K562 (cell line): ENCODE measurements at regions of chr20 and their contacts with region 1.

Region 1: DNA sequence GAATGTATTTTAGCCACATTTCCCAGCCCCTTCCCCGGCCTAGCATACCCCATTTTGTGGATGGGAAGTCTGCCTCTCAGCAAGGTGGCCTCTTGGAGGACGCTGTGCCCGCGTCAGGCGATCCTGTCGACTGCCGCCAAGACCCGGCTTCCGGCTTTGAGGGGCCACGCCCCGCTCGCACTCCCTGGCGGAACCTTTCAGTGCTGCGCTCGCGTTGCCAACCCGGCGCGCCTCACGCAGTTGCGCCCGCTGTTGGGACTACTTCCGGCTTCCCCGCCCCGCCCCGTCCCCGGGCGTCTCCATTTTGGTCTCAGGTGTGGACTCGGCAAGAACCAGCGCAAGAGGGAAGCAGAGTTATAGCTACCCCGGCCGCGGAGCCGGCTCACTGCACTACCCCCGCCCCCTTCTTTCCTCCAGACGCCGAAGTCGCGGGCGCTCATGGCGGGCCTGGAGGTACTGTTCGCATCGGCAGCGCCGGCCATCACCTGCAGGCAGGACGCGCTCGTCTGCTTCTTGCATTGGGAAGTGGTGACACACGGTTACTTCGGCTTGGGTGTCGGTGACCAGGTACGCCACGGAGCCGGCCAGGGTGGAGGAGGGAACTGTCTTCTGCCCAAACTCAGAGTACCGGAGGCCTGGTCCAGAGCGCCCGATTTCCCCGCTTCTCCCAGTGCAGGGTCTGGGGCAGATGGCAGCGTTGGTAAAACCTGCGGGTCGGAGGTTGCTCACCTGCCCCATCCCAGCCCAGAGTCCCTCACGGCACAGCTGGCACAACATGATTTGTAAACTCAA is at the start of gene PSMF1:
- DNase-seq: peak; percentile 86 to 92 (median 87)
- ATAC-seq: peak; percentile 94
- H3K4me3 ChIP-seq: peak within 1 kb of the TSS; percentile 90
- H3K27ac ChIP-seq: peak within 1 kb of the TSS; percentile 86
- H3K4me1 ChIP-seq: peaks cover 14 to 42% of the 10 kb centered on the region in 2 experiments; a peak in 4 of 5 replicates
- H3K27me3 ChIP-seq: no peaks in the 10 kb centered on the region
- CTCF ChIP-seq: peak in 2 of 3 experiments; percentile 8 to 22; a peak in 2 of 6 replicates
- EP300 ChIP-seq: peak; percentile 50
- POLR2A ChIP-seq: peak; percentile 84
- RAD21 ChIP-seq: 0 out of 4 replicates have a peak, but pooled peaks of 1 of the 2 experiments have one; percentile 11
- polyA plus RNA-seq, gene PSMF1: 8.5 to 21.3 TPM

Region 2: DNA sequence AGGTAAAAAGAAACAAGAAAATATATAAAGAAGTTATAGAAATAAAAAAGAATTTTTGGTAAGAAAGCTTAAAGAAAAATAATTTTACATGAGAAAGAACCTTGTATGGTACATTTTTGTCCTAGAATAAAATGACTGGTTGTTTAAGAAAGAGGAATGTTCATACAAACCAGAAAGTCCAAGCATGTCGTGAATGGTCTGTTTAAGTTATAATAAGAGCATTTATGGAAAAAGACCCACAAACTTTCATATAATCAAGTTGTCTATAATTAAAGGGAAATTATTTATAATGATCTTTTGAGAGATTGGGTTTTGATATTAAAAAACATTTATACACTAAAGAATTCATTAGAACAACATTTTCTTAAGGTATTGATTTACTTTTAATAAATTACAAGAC is 312.8 kb before region 1 on chr20:
- CTCF ChIA-PET with region 1: no interaction called
- POLR2A ChIA-PET with region 1: no interaction called
- in situ Hi-C with region 1: no loop called
- intact Hi-C with region 1: no loop called
- DNase-seq: no peak
- ATAC-seq: no peak
- H3K4me3 ChIP-seq: no peak overlapping the region
- H3K27ac ChIP-seq: no peak overlapping the region
- H3K4me1 ChIP-seq: no peaks in the 10 kb centered on the region
- H3K27me3 ChIP-seq: no peaks in the 10 kb centered on the region
- CTCF ChIP-seq: no peak
- EP300 ChIP-seq: no peak
- POLR2A ChIP-seq: no peak
- RAD21 ChIP-seq: no peak

Region 3: GRCh38 chr20:955111-955510 is 163.4 kb before region 1 on chr20:
- CTCF ChIA-PET with region 1: no interaction called
- POLR2A ChIA-PET with region 1: no interaction called
- in situ Hi-C with region 1: no loop called
- intact Hi-C with region 1: no loop called
- DNase-seq: no peak
- ATAC-seq: no peak
- H3K4me3 ChIP-seq: no peak overlapping the region
- H3K27ac ChIP-seq: no peak overlapping the region
- H3K4me1 ChIP-seq: peaks cover 0 to 7% of the 10 kb centered on the region in 2 experiments; a peak in 3 of 5 replicates
- H3K27me3 ChIP-seq: peaks cover 6 to 56% of the 10 kb centered on the region in 2 experiments
- CTCF ChIP-seq: no peak
- EP300 ChIP-seq: no peak
- POLR2A ChIP-seq: no peak
- RAD21 ChIP-seq: no peak

Region 4: GRCh38 chr20:1160991-1161390 is 42.5 kb after region 1 on chr20:
- CTCF ChIA-PET with region 1: no interaction called
- POLR2A ChIA-PET with region 1: no interaction called
- in situ Hi-C with region 1: no loop called
- intact Hi-C with region 1: no loop called
- DNase-seq: no peak
- ATAC-seq: no peak
- H3K4me3 ChIP-seq: no peak overlapping the region
- H3K27ac ChIP-seq: no peak overlapping the region
- H3K4me1 ChIP-seq: no peaks in the 10 kb centered on the region
- H3K27me3 ChIP-seq: no peaks in the 10 kb centered on the region
- CTCF ChIP-seq: no peak
- EP300 ChIP-seq: no peak
- POLR2A ChIP-seq: no peak
- RAD21 ChIP-seq: no peak

Region 5: DNA sequence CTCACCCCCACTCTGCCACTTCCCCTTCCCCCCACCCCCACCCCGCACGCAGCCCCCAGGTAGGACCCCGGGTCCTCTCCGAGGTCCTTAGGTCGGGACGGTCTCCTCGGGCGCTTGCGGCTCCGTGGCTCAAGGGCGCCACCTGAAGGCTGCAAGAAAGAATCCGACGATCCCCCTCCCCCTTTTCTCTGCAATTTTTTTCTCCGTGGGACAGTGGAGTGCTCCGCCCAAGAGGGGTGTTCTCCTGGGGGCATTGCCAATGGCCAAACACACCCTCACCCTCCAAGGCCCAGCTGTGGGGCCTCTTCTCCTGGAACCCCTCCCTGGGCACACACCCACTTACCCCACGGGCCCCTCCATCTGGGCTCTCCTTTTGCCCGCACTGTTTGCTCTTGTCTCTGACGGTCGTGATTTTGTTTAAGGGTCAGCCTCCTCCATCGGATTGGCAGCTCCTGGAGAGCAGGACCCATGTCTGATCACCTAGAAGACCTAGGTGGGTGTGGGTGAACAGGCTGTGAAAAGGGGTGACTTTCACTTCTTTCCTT is 67.3 kb after region 1 on chr20:
- CTCF ChIA-PET with region 1: no interaction called
- POLR2A ChIA-PET with region 1: interaction called, 5 read pairs
- in situ Hi-C with region 1: no loop called
- intact Hi-C with region 1: loop called (anchors 2 kb)
- DNase-seq: peak; percentile 68 to 83 (median 71)
- ATAC-seq: peak; percentile 74
- H3K4me3 ChIP-seq: peak overlapping the region; percentile 58
- H3K27ac ChIP-seq: peak overlapping the region; percentile 59; the same call in 1 of the 3 replicates
- H3K4me1 ChIP-seq: peaks cover 59 to 67% of the 10 kb centered on the region in 2 experiments
- H3K27me3 ChIP-seq: no peaks in the 10 kb centered on the region
- CTCF ChIP-seq: peak; percentile 60 to 67 (median 65)
- EP300 ChIP-seq: no peak
- POLR2A ChIP-seq: no peak
- RAD21 ChIP-seq: peak in 1 of 2 experiments; percentile 47; a peak in 3 of 4 replicates